Activated naive CD4-positive, alpha-beta T cell treated with anti-CD3 and anti-CD28 coated beads for 36 hours (primary cell): ENCODE measurements at regions of chr21 and their contacts with region 1.

Region 1: GRCh38 chr21:31107871-31108270 is 69.6 kb upstream of the KRTAP19-8 start:
- DNase-seq: no peak
- H3K4me3 Mint-ChIP-seq: no peak overlapping the region
- H3K27ac Mint-ChIP-seq: no peak overlapping the region
- H3K4me1 Mint-ChIP-seq: peaks cover 28% of the 10 kb centered on the region
- H3K27me3 Mint-ChIP-seq: no peaks in the 10 kb centered on the region

Region 2: GRCh38 chr21:31142600-31142999 is 34.7 kb after region 1 on chr21:
- CTCF ChIA-PET with region 1: interaction called, 3 read pairs
- intact Hi-C with region 1: loop called (anchors 2 kb)
- DNase-seq: peak; percentile 68
- H3K4me3 Mint-ChIP-seq: no peak overlapping the region
- H3K27ac Mint-ChIP-seq: no peak overlapping the region
- H3K4me1 Mint-ChIP-seq: peaks cover 32% of the 10 kb centered on the region
- H3K27me3 Mint-ChIP-seq: no peaks in the 10 kb centered on the region